ENCODE measurements at regions of chr9 and their contacts with region 1.

Region 1: DNA sequence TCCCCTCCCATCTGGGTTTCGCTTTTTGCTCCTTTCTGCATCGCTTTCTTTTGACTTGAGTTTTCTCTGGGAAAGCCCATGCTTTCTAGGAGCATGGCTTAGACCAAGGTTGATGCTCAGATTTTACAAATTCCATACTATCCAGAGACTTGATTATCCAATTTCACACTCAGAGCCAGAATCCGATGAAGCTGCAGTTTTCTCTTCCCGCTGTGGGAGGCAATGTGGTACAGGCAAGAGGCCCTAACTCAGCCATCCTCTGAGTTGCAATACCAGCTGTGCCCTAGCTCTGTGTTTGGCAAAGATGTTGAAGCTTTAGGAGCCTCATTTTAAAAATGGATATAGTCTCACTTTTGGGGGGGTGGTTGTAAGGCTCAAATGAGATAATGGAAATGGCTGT is 85.1 kb downstream of the BRINP1 start:
- DNase-seq: no peak
- ATAC-seq: peak; percentile 16 to 61
- H3K4me3 ChIP-seq: no peak overlapping the region
- H3K27ac ChIP-seq: no peak overlapping the region
- H3K4me1 ChIP-seq: peaks cover 1% of the 10 kb centered on the region
- H3K27me3 ChIP-seq: no peaks in the 10 kb centered on the region

Region 2: DNA sequence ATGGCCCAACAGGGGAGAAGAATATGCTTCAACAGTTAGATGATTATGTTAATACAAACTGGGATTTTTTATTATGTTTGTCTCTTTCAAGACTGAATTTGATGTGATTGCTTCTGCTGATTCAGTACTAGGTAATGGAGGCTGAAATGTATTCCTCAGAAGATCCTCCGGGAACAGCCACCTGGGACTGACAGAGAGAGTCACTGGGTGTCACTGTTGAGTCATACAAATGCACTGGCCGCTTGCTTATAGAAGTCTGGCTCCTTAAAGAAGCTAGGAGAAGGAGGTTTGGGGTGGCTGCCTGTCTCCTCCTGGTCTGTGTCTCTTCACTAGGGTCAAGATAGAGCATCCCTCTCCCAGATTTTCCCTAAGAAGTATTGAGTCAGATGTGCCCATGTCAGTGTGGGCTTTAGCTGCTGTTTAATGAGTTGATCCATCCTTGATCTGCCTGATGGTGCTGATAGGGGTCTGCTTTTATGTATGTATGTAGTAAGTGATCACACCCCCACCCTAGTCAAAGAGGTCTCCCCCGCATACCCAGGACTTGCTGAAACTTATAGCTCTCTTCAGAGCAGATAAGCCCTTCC is 688.3 kb before region 1 on chr9:
- intact Hi-C with region 1: loop called in 1 of 4 experiments (anchors 5 kb)
- DNase-seq: no peak
- ATAC-seq: peak; percentile 26 to 64
- H3K4me3 ChIP-seq: no peak overlapping the region
- H3K27ac ChIP-seq: no peak overlapping the region
- H3K4me1 ChIP-seq: no peaks in the 10 kb centered on the region
- H3K27me3 ChIP-seq: no peaks in the 10 kb centered on the region